Dendritic cell treated with granulocyte-macrophage colony-stimulating factor and Interleukin-4, amounts not matched to agents 40 ng/mL and 50 ng/mL, for 4 days (primary cell): ENCODE measurements at regions of chr11 and their contacts with region 1.

Region 1: DNA sequence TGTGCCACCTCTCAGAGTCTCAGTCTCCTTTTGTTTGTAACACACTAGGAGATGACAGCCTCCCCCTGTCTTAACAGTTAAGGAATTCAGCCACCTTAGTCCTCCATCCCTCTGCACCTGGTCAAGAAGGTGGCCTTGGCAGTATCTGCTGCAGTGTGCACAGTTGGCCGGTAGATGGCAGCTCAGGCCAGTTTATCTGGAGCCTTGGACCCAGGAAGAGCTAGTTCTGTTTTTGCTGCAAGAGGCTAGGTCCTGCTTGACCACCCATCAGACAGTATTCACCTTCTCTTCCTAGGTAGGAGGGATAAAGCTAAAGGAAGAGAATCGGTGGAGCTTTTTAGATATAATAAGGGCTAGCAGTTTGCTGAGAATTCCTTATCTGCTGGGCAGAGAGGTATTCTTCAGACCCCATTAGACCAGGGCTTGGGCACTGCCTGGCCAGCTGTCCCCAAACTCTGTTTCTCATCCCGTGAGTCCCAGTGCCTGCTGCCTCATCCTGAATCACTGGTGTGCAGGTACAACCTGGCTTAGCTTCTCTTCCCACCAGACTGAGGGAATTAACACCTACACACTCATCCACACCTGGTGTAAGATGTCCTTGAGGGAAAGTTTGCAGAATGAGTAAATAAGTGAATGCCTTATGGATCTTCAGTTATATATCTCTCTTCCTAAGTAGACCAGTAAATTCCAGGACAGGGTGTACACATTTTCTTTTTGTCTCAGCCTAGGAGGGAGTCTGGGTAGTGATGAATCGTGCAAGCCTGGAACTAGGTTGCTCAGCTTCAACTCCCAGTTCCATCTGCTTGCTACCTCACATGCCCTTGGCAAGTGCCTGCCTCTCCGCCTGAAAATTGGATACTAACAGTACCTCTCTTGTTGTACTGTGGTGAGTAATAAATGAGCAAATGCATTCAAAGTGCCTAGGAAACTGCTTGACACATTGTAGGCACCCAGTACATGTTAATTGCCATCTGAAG is 70.8 kb upstream of the NARS2 start:
- H3K4me3 Mint-ChIP-seq: no peak overlapping the region
- H3K27ac Mint-ChIP-seq: no peak overlapping the region
- H3K4me1 Mint-ChIP-seq: no peaks in the 10 kb centered on the region
- H3K27me3 Mint-ChIP-seq: peaks cover 10% of the 10 kb centered on the region

Region 2: DNA sequence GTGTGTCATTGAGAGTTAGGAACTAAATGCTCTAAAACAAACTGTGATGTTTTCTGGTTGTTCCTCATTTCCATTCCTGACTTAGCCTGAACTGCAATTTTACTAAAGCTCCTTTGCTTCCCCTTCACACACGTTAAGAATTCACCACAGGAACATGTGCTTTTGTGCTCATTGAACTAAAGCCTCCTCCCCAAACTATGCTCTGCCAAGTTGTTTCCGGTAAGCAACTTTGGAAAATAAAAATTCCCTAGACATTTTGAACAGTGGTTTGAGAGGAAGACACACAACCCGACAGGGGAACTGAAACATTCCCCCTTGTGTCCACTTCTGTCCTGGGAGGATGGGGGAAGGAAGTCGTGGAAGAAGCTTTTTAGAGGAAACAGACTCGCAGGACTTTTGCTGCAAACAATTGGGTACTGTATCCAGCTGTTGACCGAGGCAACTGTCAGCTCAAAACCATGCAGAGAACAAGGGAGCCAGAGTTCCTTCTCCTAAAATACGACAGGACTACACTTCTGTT is 294.8 kb before region 1 on chr11:
- intact Hi-C with region 1: no loop called
- H3K4me3 Mint-ChIP-seq: peak overlapping the region; percentile 43
- H3K27ac Mint-ChIP-seq: peak overlapping the region; percentile 98
- H3K4me1 Mint-ChIP-seq: peaks cover 91% of the 10 kb centered on the region
- H3K27me3 Mint-ChIP-seq: no peaks in the 10 kb centered on the region

Region 3: DNA sequence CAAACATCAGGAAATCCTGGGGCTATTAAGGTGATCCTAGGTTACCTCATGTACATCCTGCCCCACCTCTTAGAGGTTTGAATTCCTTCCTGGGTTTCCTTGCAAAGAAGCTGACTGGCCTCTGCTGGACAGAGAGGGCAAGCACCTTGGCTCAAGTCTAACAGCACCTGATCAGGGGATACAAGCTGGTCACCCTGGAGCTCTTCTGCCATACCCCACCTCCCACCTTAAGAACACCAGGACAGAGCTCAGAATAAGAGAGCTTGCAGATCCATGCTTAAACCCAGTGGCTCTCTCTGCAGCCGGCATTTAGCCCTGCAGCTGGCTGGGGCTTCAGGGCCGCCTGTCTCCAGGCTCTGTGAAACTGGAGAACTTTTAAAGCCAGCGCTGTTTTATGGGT is 315.7 kb after region 1 on chr11:
- intact Hi-C with region 1: loop called (anchors 1 kb)
- H3K4me3 Mint-ChIP-seq: no peak overlapping the region
- H3K27ac Mint-ChIP-seq: no peak overlapping the region
- H3K4me1 Mint-ChIP-seq: no peaks in the 10 kb centered on the region
- H3K27me3 Mint-ChIP-seq: peaks cover 66% of the 10 kb centered on the region

Region 4: GRCh38 chr11:79076526-79077115 is 431.1 kb after region 1 on chr11:
- intact Hi-C with region 1: loop called (anchors 1 kb)
- H3K4me3 Mint-ChIP-seq: no peak overlapping the region
- H3K27ac Mint-ChIP-seq: no peak overlapping the region
- H3K4me1 Mint-ChIP-seq: no peaks in the 10 kb centered on the region
- H3K27me3 Mint-ChIP-seq: peaks cover 3% of the 10 kb centered on the region

Region 5: DNA sequence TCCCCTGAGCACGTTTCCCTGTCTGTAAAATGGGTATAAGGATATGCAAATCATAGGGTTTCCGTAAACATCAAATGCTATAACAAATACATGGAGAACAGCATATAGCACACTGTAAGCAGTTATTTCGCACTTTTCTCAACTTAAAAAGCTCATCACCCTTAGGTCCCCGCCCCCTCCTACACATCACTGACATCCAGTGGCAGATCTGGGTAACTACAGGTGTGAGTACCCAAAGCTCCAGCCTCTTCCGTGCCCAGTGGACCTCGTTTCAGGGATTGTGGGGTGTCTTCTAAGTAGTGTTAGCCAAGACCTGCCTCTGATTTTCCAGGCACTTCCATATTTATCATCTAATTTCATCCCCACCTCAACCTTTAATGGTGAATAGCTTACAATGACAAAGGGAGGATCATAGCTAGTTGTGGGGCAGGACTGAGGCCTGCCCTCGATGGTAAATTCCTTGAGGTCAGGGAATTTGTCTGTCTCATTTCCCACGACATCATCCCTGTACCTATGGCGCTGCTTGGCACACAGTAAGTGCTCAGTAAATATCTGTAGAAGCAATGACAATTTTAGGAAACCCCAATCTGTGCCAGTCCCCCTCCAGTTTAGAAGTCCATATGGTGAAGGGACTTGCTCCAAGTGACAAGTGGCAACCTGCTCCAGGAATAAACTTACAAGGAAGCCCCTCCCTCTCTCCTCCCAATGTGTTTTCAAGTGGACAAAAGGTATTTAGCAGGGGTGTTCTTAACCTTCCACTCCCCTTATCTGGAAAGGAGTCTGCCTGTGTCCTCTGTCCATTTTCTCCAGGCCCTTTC is 454.8 kb after region 1 on chr11:
- intact Hi-C with region 1: loop called (anchors 1 kb)
- H3K4me3 Mint-ChIP-seq: no peak overlapping the region
- H3K27ac Mint-ChIP-seq: no peak overlapping the region
- H3K4me1 Mint-ChIP-seq: no peaks in the 10 kb centered on the region
- H3K27me3 Mint-ChIP-seq: peaks cover 13% of the 10 kb centered on the region

Region 6: DNA sequence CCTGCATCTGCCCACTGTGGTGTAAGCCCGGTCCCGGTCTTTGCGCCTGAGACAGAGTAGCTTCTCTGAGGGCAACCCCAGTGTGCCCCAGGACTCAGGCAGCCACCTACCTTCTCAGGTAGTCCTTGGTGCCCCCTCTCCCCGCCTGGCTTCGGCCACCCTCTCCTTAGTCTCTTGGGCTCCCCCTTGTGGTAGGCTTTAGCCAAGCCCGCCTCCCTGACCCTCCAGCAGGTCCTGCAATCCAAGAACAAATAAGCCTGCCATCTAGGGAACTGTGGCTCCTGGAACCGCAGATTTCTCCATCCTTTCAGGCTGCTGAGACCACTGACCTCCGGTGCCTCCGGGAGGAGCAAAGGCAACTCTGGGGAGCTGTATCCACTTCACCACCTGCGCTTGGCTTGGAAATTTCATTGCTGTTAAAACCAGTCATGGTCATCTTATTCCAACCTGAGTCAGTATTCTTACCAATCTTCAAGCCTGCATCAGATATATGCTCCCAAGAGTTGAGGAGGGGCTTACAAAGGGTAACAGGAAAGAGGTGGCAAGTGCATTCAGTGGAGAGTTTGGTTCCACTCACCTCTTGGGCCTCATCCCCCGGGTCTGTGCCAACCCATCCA is 848.1 kb after region 1 on chr11:
- intact Hi-C with region 1: loop called (anchors 2 kb)
- H3K4me3 Mint-ChIP-seq: no peak overlapping the region
- H3K27ac Mint-ChIP-seq: no peak overlapping the region
- H3K4me1 Mint-ChIP-seq: peaks cover 5% of the 10 kb centered on the region
- H3K27me3 Mint-ChIP-seq: peaks cover 40% of the 10 kb centered on the region